Activated CD4-positive, alpha-beta T cell treated with anti-CD3 and anti-CD28 coated beads for 36 hours (primary cell): ENCODE measurements at regions of chr7 and their contacts with region 1.

Region 1: GRCh38 chr7:91880413-91881241 is at the start of gene MTERF1:
- DNase-seq: peak; percentile 97
- ATAC-seq: peak; percentile 98
- H3K4me3 Mint-ChIP-seq: peak within 1 kb of the TSS; percentile 92
- H3K27ac Mint-ChIP-seq: peak within 1 kb of the TSS; percentile 94
- H3K4me1 Mint-ChIP-seq: peaks cover 29% of the 10 kb centered on the region
- H3K27me3 Mint-ChIP-seq: no peaks in the 10 kb centered on the region
- total RNA-seq, gene MTERF1: 16.7 to 16.9 TPM

Region 2: DNA sequence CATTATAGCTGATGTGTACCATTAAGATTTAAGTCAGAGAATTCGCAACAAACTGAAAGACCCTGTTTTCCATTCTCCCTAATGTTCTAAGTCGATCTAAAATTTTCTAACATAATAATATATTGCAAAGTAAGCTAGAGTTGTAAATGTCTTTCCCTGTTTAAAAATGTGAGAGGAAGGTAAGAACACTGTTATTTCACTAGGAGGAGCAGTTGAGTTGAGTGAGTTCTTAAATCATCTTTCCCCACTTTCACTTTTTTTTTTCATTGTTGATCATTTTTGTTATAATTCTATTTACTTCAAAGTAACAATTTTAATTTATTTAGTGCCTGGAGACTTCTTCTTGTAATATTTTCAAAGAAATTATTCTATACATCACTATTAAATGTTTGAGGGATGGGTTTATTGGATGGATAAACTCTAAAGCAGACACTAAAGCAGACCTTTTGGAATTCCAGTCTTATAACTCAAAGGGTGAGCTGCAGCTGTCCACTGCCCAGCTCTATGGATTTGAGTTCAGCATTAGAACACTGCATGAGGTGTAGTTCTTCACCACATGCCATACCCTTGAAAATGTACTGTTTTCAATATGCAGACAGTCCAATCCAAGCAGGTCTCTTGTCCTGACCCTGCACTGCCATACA is 797.7 kb before region 1 on chr7:
- CTCF ChIA-PET with region 1: interaction called, 3 read pairs
- POLR2A ChIA-PET with region 1: no interaction called
- intact Hi-C with region 1: loop called in 1 of 2 experiments (anchors 5 kb)
- DNase-seq: no peak
- ATAC-seq: peak; percentile 10
- H3K4me3 Mint-ChIP-seq: peak overlapping the region; percentile 16
- H3K27ac Mint-ChIP-seq: no peak overlapping the region
- H3K4me1 Mint-ChIP-seq: peaks cover 32% of the 10 kb centered on the region
- H3K27me3 Mint-ChIP-seq: peaks cover 1% of the 10 kb centered on the region

Region 3: DNA sequence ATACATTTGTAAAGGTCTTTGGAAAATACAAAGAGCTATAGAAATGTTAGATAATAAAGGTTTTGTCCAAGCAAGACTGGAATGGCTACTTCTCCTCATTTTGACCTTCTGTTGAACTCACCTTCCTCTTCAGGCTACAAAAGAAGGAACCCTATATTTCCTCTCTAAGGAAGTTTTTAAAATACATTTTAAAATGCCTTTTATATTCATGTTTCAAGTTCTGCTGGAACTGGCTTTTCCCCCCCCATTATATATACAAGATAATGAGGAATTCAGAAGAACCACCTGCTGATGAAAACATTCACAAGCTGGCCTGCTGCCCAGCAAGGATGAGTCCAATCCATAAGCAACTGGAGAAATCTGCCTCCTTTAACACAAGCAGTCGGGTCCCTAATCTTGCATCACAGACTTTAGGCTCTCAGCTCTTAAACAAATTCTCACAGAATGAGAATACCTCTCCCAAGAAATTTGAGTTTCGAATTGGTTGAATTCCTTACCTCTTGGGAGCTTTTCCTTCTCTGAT is 44.7 kb before region 1 on chr7:
- CTCF ChIA-PET with region 1: interaction called, 21 read pairs
- POLR2A ChIA-PET with region 1: no interaction called
- intact Hi-C with region 1: loop called in 1 of 2 experiments (anchors 2 kb)
- DNase-seq: no peak
- ATAC-seq: no peak
- H3K4me3 Mint-ChIP-seq: no peak overlapping the region
- H3K27ac Mint-ChIP-seq: no peak overlapping the region
- H3K4me1 Mint-ChIP-seq: no peaks in the 10 kb centered on the region
- H3K27me3 Mint-ChIP-seq: no peaks in the 10 kb centered on the region

Region 4: GRCh38 chr7:91940572-91941341 is 60.1 kb after region 1 on chr7 and contains the start of gene AKAP9:
- CTCF ChIA-PET with region 1: interaction called, 20 read pairs
- POLR2A ChIA-PET with region 1: interaction called, 4 read pairs
- intact Hi-C with region 1: loop called (anchors 1 kb)
- DNase-seq: peak; percentile 94
- ATAC-seq: peak; percentile 91
- H3K4me3 Mint-ChIP-seq: peak within 1 kb of the TSS; percentile 87
- H3K27ac Mint-ChIP-seq: peak within 1 kb of the TSS; percentile 94
- H3K4me1 Mint-ChIP-seq: peaks cover 29% of the 10 kb centered on the region
- H3K27me3 Mint-ChIP-seq: no peaks in the 10 kb centered on the region
- total RNA-seq, gene AKAP9: 25.3 to 25.4 TPM

Region 5: DNA sequence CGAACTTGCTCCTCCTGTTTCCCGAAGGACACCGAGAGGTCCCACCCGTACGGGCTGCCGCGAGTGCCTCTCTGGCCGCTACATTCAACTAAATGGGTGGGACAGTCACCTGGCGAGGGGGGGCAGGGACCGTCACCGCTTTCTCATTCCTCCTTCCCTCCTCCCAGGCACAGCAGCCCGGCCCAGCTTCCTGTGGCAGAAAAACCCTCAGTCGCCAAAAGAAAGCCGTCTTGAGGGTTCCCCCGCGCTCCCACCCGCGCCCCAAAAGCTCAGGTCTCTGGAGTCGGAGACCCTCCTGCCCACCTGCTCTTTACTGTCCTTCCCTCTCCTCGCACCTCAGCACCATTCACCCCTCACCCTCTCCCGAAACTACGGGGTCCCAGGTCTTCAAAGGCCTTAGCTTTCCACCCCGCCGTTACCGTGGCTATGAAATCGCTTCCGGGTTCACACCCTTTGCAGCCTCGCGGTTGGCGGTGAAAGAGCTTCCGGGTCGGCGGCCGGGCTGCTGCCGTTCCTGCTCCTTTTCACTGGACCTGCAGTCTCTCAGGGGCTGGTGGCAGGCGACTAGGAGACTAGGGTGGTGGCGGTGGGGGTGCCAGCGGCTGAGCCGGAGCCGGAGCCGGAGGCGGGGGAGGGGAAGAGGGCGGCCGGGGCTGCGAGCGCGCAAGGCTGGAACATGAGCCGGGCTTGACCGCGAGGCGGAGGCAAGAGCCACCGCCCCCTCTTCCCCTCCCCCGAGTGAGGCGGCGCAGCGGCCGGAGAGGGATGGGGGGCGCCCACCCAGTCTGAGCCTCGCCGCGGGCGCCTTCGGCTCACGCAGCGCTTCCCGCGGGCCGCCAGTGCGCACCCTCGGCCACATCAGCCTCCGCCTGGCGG is 365.1 kb after region 1 on chr7 and contains the starts of genes ANKIB1 and KRIT1:
- CTCF ChIA-PET with region 1: interaction called, 4 read pairs
- POLR2A ChIA-PET with region 1: no interaction called
- intact Hi-C with region 1: loop called in 1 of 2 experiments (anchors 1 kb)
- DNase-seq: peak; percentile 93
- ATAC-seq: peak; percentile 81
- H3K4me3 Mint-ChIP-seq: peak within 1 kb of the TSS; percentile 97
- H3K27ac Mint-ChIP-seq: peak within 1 kb of the TSS; percentile 98
- H3K4me1 Mint-ChIP-seq: peaks cover 26% of the 10 kb centered on the region
- H3K27me3 Mint-ChIP-seq: no peaks in the 10 kb centered on the region
- total RNA-seq, gene ANKIB1: 37.0 to 55.1 TPM
- total RNA-seq, gene KRIT1: 37.7 to 45.5 TPM

Region 6: GRCh38 chr7:93265220-93265619 is 1384.6 kb after region 1 on chr7:
- CTCF ChIA-PET with region 1: no interaction called
- POLR2A ChIA-PET with region 1: no interaction called
- intact Hi-C with region 1: no loop called
- DNase-seq: no peak
- ATAC-seq: no peak
- H3K4me3 Mint-ChIP-seq: no peak overlapping the region
- H3K27ac Mint-ChIP-seq: no peak overlapping the region
- H3K4me1 Mint-ChIP-seq: no peaks in the 10 kb centered on the region
- H3K27me3 Mint-ChIP-seq: no peaks in the 10 kb centered on the region